ENCODE measurements at regions of chr10 and their contacts with region 1.

Region 1: GRCh38 chr10:129033790-129034272 is 433.2 kb upstream of the MGMT start:
- DNase-seq: peak in 1 of 5 donors; percentile 41
- H3K4me3 ChIP-seq: no peak overlapping the region
- H3K27ac ChIP-seq: no peak overlapping the region
- H3K4me1 ChIP-seq: peaks cover 0 to 4% (median 2%) of the 10 kb centered on the region in 3 donors
- H3K27me3 ChIP-seq: peaks cover 9% of the 10 kb centered on the region
- CTCF ChIP-seq: no peak

Region 2: DNA sequence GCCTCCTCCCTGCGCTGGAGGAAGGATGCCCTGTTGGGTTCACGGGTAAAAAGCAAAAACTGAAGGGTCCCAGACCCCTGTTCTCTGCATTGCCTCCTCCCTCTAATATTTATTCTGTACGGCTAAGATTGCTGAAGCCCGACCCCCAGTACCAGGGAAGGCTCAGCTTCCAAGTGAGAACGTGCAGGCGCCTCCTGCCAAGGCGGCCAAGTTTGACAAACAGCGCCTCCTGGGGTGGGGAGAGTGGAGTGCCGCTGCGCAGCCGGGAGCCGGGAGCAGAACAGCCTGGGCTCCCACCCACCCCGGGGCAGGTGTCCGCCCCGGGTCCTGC is 935.0 kb after region 1 on chr10:
- intact Hi-C with region 1: loop called (anchors 2 kb)
- DNase-seq: peak in 4 of 5 donors; percentile 89 to 90 (median 90)
- H3K4me3 ChIP-seq: no peak overlapping the region
- H3K27ac ChIP-seq: no peak overlapping the region
- H3K4me1 ChIP-seq: no peaks in the 10 kb centered on the region
- H3K27me3 ChIP-seq: peaks cover 58% of the 10 kb centered on the region
- CTCF ChIP-seq: peak; percentile 54

Measured in kidney (tissue), 22 donors.